ENCODE measurements at regions of chr1 and their contacts with region 1.

Region 1: DNA sequence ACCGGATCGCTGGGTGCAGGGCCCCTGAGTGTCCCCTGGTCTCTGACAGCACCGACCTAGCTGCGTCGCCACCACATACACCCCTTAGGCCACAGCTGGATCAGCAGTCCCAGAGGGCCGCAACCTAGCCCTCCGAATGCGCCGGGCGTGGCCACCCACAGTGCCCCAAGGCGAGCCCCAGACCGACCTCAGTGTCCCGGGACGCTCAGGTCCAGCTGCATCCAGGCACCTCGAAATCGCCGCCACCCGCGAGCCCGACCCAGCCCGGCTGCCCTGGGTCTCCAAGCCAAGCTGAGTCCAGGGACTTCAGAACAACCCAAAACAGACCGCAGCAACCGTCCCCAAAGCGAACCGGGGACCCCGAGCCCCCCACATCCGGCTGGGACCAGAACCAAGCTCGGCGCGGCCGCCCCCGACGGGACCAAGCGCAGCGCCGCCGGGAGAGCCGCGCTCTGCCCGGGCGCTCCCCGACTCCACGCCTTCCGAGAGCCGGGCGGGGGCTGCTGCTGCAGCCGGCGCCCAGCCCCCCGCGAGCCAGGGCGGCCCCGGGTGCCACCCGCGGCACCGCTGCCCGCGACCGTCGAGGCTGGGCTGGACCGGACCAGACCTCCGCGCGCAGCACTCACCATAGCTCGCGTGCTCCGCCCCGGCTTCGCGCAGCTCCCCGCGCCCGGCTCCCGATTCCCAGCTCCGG is 54.6 kb upstream of the ECE1 start:
- DNase-seq: peak in 1 of 10 donors; percentile 31
- H3K4me3 ChIP-seq: peak overlapping the region; percentile 59 to 93 (median 82)
- H3K27ac ChIP-seq: peak overlapping the region in 58 of 59 donors; percentile 32 to 93 (median 82)
- H3K27me3 ChIP-seq: no peaks in the 10 kb centered on the region
- CTCF ChIP-seq: no peak

Region 2: GRCh38 chr1:21308847-21309652 is 35.8 kb before region 1 on chr1:
- intact Hi-C with region 1: loop called (anchors 5 kb)
- DNase-seq: peak in 1 of 10 donors; percentile 33
- H3K4me3 ChIP-seq: no peak overlapping the region
- H3K27ac ChIP-seq: peak overlapping the region in 48 of 59 donors; percentile 23 to 97 (median 88)
- H3K27me3 ChIP-seq: no peaks in the 10 kb centered on the region
- CTCF ChIP-seq: no peak

Region 3: GRCh38 chr1:21361506-21361905 is 16.6 kb after region 1 on chr1:
- intact Hi-C with region 1: loop called in 1 of 2 experiments (anchors 2 kb)
- DNase-seq: no peak
- H3K4me3 ChIP-seq: peak overlapping the region in 1 of 59 donors; percentile 1
- H3K27ac ChIP-seq: peak overlapping the region; percentile 16 to 94 (median 87)
- H3K27me3 ChIP-seq: no peaks in the 10 kb centered on the region
- CTCF ChIP-seq: no peak

Measured in dorsolateral prefrontal cortex (tissue), 120 donors.